ENCODE measurements at regions of chr11 and their contacts with region 1.

Region 1: DNA sequence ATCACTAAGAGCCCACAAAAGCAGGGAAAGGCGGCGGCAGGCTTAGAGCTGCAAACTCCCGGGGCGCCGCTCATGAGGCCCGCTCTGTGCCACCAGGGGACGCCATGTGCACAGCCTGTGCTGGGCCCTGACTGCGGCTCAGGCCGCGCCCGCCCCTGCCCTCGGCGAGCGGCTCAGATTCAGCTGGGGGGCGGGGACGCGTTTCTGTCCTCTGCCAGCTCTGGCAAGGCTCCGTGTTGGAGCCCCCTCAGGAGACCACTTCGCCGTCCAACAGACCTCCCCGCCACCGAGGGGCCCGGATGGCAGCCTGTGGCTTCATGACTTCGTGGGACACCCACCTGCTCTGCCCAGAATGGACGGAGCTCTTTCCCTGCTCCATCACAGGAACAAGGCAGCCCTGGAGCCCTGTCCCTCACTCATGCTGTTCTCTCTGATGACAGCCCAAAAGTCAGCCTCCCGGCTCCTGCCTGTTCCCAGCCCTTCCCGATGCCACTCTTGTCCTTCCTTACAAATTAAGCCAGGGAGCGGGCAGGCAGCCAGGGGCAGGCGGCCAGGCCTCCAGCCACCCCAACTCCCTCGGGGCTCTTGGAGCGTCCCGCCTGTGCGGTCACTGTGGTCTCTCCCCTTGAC is 69.1 kb downstream of the NAT10 start:
- DNase-seq: peak; percentile 77
- H3K4me3 ChIP-seq: no peak overlapping the region
- H3K27ac ChIP-seq: no peak overlapping the region
- H3K4me1 ChIP-seq: no peaks in the 10 kb centered on the region
- CTCF ChIP-seq: peak; percentile 78

Region 2: DNA sequence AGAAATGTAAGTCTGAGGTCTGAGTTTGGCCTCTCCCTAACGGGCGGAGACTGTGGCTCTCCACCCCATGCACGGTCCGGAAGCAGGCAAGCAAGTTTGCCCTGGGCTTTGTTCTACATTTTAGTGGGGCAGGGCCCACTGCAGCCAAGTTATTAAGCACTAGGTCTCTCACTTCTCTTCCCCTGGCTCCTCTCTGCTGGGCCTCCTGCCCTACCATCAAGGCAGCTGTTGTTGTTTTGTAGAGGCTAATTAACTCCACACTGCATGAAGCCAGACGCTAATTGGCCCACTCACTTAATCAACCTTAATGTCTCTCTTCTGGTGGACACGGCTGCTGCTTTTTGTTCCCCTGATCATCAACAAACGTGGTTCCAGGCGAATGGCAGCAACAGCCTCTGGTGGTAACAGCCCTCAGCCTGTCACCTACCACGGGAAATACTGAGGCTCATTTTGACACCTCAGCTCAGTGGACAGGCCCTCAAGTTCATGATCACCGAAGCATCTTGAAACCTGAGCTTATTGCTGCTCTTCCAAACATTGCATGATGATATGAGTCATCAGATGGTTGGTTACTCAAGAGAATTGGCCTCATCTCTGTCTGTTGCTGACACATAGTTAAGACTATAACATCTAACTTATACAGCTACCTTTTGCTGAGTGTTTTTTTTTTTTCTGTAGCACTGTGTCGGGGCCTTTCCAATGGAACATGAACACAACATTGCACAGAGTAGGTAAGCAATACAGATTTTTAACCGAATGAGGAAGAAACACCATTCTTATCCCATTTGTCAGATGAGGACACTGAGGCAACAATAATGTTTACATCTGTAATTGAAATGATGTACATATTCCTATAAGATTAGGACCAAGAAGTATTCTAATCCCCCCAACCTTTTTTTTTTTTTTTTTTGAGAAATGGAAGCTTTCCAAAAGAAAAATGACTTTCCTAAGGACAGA is 261.8 kb before region 1 on chr11:
- CTCF ChIA-PET with region 1: no interaction called
- POLR2A ChIA-PET with region 1: no interaction called
- intact Hi-C with region 1: no loop called
- DNase-seq: no peak
- H3K4me3 ChIP-seq: no peak overlapping the region
- H3K27ac ChIP-seq: no peak overlapping the region
- H3K4me1 ChIP-seq: no peaks in the 10 kb centered on the region
- CTCF ChIP-seq: no peak

Region 3: DNA sequence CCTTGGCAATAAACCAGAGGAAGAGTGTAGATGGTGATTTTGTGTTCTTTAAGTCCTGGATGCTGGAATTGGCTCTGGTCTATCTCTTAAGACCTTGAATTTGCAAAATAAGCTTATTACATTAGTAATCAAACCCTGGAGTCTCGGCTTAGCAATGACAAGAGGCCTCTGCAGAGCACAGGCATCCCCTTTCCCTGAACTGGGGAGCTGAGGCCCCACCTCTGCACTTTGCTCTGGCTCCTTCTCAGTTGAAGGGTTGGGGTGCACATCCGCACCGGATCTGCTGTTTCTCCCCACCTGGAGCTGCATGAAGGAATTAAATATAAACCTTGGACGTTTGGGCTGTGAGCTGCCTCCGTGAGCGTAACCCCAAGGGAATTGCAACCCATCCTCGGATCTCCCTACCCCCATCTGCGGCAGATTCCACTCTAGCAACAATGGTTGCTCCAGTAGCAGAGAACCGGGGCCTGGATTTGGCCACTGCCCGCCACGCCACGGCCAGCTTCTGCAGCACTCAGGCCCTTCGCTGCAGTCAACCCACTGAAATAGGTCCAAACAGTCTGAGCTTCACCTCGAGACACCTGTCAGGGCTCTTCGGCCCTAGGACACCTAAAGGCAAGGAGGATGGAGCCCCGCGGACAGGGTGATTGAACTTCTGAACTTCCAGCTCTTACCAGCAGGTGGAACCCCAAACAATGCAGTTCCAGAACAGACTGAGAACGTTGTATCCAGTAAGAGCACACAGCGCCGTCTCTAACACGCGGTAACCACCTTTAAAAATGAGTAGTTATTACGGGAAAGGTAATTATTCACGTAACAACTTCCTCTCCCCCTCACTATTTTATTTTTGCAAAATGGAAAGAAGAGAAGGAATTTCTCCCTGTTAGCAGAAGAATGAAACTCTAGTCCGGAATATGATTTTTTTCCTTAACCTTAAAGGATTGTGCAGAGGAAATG is 177.8 kb before region 1 on chr11:
- CTCF ChIA-PET with region 1: no interaction called
- POLR2A ChIA-PET with region 1: no interaction called
- intact Hi-C with region 1: loop called (anchors 5 kb)
- DNase-seq: peak; percentile 82
- H3K4me3 ChIP-seq: no peak overlapping the region
- H3K27ac ChIP-seq: no peak overlapping the region
- H3K4me1 ChIP-seq: peaks cover 9% of the 10 kb centered on the region
- CTCF ChIP-seq: peak; percentile 90

Region 4: GRCh38 chr11:34234086-34234740 is 59.7 kb after region 1 on chr11:
- CTCF ChIA-PET with region 1: no interaction called
- POLR2A ChIA-PET with region 1: interaction called, 3 read pairs
- intact Hi-C with region 1: loop called (anchors 10 kb)
- DNase-seq: peak; percentile 68
- H3K4me3 ChIP-seq: no peak overlapping the region
- H3K27ac ChIP-seq: no peak overlapping the region
- H3K4me1 ChIP-seq: peaks cover 18% of the 10 kb centered on the region
- CTCF ChIP-seq: no peak

Region 5: GRCh38 chr11:34492806-34493414 is 318.4 kb after region 1 on chr11:
- CTCF ChIA-PET with region 1: interaction called, 3 read pairs
- POLR2A ChIA-PET with region 1: interaction called, 3 read pairs
- intact Hi-C with region 1: loop called (anchors 2 kb)
- DNase-seq: peak; percentile 67
- H3K4me3 ChIP-seq: no peak overlapping the region
- H3K27ac ChIP-seq: no peak overlapping the region
- H3K4me1 ChIP-seq: no peaks in the 10 kb centered on the region
- CTCF ChIP-seq: peak; percentile 95

Region 6: GRCh38 chr11:34869426-34869825 is 694.9 kb after region 1 on chr11:
- CTCF ChIA-PET with region 1: no interaction called
- POLR2A ChIA-PET with region 1: no interaction called
- intact Hi-C with region 1: no loop called
- DNase-seq: no peak
- H3K4me3 ChIP-seq: no peak overlapping the region
- H3K27ac ChIP-seq: no peak overlapping the region
- H3K4me1 ChIP-seq: no peaks in the 10 kb centered on the region
- CTCF ChIP-seq: no peak; the same call in 1 of the 2 replicates

Measured in OCI-LY7 (cell line).